HepG2 (cell line): ENCODE measurements at regions of chr15 and their contacts with region 1.

Region 1: GRCh38 chr15:42495361-42496212 is at the start of gene SNAP23:
- DNase-seq: peak; percentile 94
- ATAC-seq: peak; percentile 96
- H3K4me3 ChIP-seq: peak within 1 kb of the TSS; percentile 78 to 84 (median 82)
- H3K27ac ChIP-seq: peak within 1 kb of the TSS; percentile 82
- H3K4me1 ChIP-seq: peaks cover 72% of the 10 kb centered on the region
- H3K27me3 ChIP-seq: no peaks in the 10 kb centered on the region; a peak in 1 of 5 replicates
- CTCF ChIP-seq: no peak
- EP300 ChIP-seq: no peak
- POLR2A ChIP-seq: peak; percentile 74 to 88
- RAD21 ChIP-seq: no peak; the same call in 1 of the 2 replicates
- total RNA-seq, gene SNAP23: 101 and 136 TPM in 2 replicates

Region 2: GRCh38 chr15:42392309-42393024 is 103.1 kb before region 1 on chr15:
- CTCF ChIA-PET with region 1: no interaction called
- POLR2A ChIA-PET with region 1: interaction called, 12 read pairs
- in situ Hi-C with region 1: no loop called
- intact Hi-C with region 1: no loop called
- DNase-seq: peak; percentile 98
- ATAC-seq: peak; percentile 99
- H3K4me3 ChIP-seq: peak overlapping the region; percentile 48 to 74 (median 50); a peak in 5 of 6 replicates
- H3K27ac ChIP-seq: peak overlapping the region; percentile 100
- H3K4me1 ChIP-seq: peaks cover 59% of the 10 kb centered on the region
- H3K27me3 ChIP-seq: no peaks in the 10 kb centered on the region
- CTCF ChIP-seq: peak; percentile 38; the same call in 1 of the 2 replicates
- EP300 ChIP-seq: peak; percentile 62 to 72; a peak in 2 of 4 replicates
- POLR2A ChIP-seq: peak; percentile 80 to 95
- RAD21 ChIP-seq: peak; percentile 32; the same call in 1 of the 2 replicates

Region 3: GRCh38 chr15:42548253-42549031 is 52.9 kb after region 1 on chr15 and contains the starts of genes HAUS2 and LRRC57:
- CTCF ChIA-PET with region 1: no interaction called
- POLR2A ChIA-PET with region 1: interaction called, 10 read pairs
- in situ Hi-C with region 1: no loop called
- intact Hi-C with region 1: loop called (anchors 2 kb)
- DNase-seq: peak; percentile 77
- ATAC-seq: peak; percentile 95
- H3K4me3 ChIP-seq: peak within 1 kb of the TSS; percentile 87 to 96 (median 96)
- H3K27ac ChIP-seq: peak within 1 kb of the TSS; percentile 68
- H3K4me1 ChIP-seq: peaks cover 45% of the 10 kb centered on the region
- H3K27me3 ChIP-seq: no peaks in the 10 kb centered on the region; a peak in 1 of 5 replicates
- CTCF ChIP-seq: no peak
- EP300 ChIP-seq: no peak
- POLR2A ChIP-seq: peak; percentile 87 to 94
- RAD21 ChIP-seq: no peak
- total RNA-seq, gene HAUS2: 32.9 and 49.4 TPM in 2 replicates
- total RNA-seq, gene LRRC57: 14.8 and 26.0 TPM in 2 replicates

Region 4: GRCh38 chr15:42575188-42576039 is 79.8 kb after region 1 on chr15 and contains the start of gene STARD9:
- CTCF ChIA-PET with region 1: no interaction called
- POLR2A ChIA-PET with region 1: interaction called, 18 read pairs
- in situ Hi-C with region 1: no loop called
- intact Hi-C with region 1: no loop called
- DNase-seq: peak; percentile 96
- ATAC-seq: peak; percentile 95
- H3K4me3 ChIP-seq: peak within 1 kb of the TSS; percentile 76 to 93 (median 77)
- H3K27ac ChIP-seq: peak within 1 kb of the TSS; percentile 80
- H3K4me1 ChIP-seq: peaks cover 34% of the 10 kb centered on the region
- H3K27me3 ChIP-seq: no peaks in the 10 kb centered on the region; a peak in 1 of 5 replicates
- CTCF ChIP-seq: no peak; the same call in 1 of the 2 replicates
- EP300 ChIP-seq: 0 out of 4 replicates have a peak, but pooled peaks of 1 of the 2 experiments have one; percentile 4
- POLR2A ChIP-seq: peak; percentile 76 to 86
- RAD21 ChIP-seq: peak; percentile 19; the same call in 1 of the 2 replicates
- total RNA-seq, gene STARD9: 2.7 and 5.3 TPM in 2 replicates

Region 5: DNA sequence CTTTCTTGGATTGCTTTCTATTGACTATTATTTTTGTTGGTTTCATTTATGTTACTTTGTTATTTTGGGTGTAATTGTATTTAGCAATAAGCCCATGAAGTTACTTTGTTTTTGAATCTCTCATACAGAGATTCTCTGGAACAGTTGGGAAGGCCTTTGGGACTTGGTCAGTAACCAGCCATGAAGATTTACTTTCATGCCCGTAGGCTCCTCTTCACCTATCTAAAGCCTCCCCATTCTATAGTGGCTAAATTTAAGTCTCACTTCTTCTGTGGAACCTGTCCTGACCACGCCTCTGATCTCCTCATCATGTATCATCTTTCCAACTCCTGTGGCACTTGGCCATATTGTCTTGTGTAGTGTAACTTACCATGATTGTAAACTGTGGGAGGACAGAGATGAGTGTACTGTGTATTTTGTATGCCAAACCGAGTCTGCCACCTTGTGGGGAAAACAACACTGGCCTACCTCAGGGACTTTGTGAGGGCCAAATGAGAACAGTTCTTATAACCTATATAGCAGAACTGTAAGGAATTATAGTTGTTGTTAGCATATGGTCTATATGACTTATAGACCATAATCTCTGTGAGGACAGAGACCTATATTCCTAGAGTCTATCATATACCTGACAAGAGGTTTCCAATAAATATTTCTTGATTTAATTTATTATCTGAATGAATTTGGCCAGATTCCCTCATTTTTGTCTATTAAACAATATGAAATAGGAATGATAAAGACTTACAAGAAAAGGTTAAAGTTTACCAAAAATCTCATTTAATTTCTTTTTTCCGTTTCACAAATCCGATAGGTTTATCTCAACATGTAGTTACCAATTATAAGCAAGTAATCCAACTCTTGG is 154.8 kb after region 1 on chr15:
- CTCF ChIA-PET with region 1: no interaction called
- POLR2A ChIA-PET with region 1: no interaction called
- in situ Hi-C with region 1: no loop called
- intact Hi-C with region 1: loop called (anchors 5 kb)
- DNase-seq: peak; percentile 63
- ATAC-seq: peak; percentile 98
- H3K4me3 ChIP-seq: no peak overlapping the region
- H3K27ac ChIP-seq: no peak overlapping the region
- H3K4me1 ChIP-seq: peaks cover 9% of the 10 kb centered on the region
- H3K27me3 ChIP-seq: no peaks in the 10 kb centered on the region
- CTCF ChIP-seq: peak; percentile 82
- EP300 ChIP-seq: no peak
- POLR2A ChIP-seq: no peak
- RAD21 ChIP-seq: peak; percentile 75